CD4-positive, alpha-beta memory T cell (primary cell): ENCODE measurements at regions of chr22 and their contacts with region 1.

Region 1: GRCh38 chr22:36301384-36301828 is 48.5 kb downstream of the APOL1 start:
- DNase-seq: peak; percentile 80 to 83 (median 80)
- H3K4me3 ChIP-seq: no peak overlapping the region
- H3K4me3 Mint-ChIP-seq: peak overlapping the region in 1 of 8 donors; percentile 49
- H3K27ac ChIP-seq: peak overlapping the region; percentile 8
- H3K27ac Mint-ChIP-seq: peak overlapping the region; percentile 57 to 89 (median 81)
- H3K4me1 ChIP-seq: peaks cover 11% of the 10 kb centered on the region
- H3K4me1 Mint-ChIP-seq: peaks cover 5 to 24% (median 14%) of the 10 kb centered on the region in 4 donors
- H3K27me3 ChIP-seq: no peaks in the 10 kb centered on the region
- H3K27me3 Mint-ChIP-seq: no peaks in the 10 kb centered on the region

Region 2: GRCh38 chr22:36136475-36136874 is 164.9 kb before region 1 on chr22:
- CTCF ChIA-PET with region 1: no interaction called
- POLR2A ChIA-PET with region 1: no interaction called
- intact Hi-C with region 1: no loop called
- DNase-seq: no peak
- H3K4me3 ChIP-seq: no peak overlapping the region
- H3K4me3 Mint-ChIP-seq: no peak overlapping the region
- H3K27ac ChIP-seq: no peak overlapping the region
- H3K27ac Mint-ChIP-seq: peak overlapping the region in 3 of 7 donors; percentile 7 to 66 (median 10)
- H3K4me1 ChIP-seq: peaks cover 11% of the 10 kb centered on the region
- H3K4me1 Mint-ChIP-seq: peaks cover 8 to 37% (median 19%) of the 10 kb centered on the region in 4 donors
- H3K27me3 ChIP-seq: no peaks in the 10 kb centered on the region
- H3K27me3 Mint-ChIP-seq: no peaks in the 10 kb centered on the region

Region 3: DNA sequence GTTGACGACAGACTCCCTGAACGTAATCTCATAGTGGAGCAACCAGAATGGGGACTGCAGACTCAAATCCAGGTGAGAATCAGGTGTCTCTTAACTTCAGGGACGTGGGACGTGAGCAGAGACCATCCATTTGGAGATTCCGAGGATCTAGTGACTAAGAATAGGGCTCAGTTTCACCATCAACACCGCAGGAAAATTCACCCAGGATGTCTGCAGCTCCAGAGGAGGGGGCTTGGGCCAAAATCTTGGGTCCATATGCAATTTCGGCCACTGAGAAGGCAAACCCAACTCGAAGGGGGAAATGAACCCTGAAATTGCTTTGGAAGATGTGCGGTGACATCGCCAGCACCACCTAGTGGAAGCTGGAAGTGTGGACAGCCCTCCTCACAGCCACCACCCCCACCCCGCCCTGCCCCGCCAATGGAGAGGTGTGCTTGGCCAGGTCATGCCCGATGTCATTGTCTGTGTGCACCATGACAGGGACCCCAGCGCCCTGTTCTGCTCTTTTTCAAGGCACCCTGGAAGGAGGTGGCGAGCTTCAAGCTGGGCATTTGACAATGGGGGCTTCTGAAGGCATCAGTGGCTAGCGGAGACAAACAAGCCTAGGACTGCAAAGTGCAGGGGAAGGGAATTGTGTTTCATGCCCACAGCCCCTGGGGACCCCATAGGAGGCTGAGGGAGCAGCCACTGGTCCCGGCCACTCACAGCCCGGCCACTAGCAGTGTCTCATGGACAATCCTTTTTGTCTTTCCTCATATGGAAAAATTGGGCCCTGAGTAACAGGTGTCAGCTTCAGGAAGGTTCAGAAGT is 23.7 kb before region 1 on chr22:
- CTCF ChIA-PET with region 1: interaction called, 13 read pairs
- POLR2A ChIA-PET with region 1: interaction called, 4 read pairs
- intact Hi-C with region 1: no loop called
- DNase-seq: peak; percentile 53 to 75 (median 59)
- H3K4me3 ChIP-seq: no peak overlapping the region
- H3K4me3 Mint-ChIP-seq: peak overlapping the region in 1 of 8 donors; percentile 59
- H3K27ac ChIP-seq: no peak overlapping the region
- H3K27ac Mint-ChIP-seq: peak overlapping the region in 6 of 7 donors; percentile 50 to 88 (median 79)
- H3K4me1 ChIP-seq: peaks cover 15% of the 10 kb centered on the region
- H3K4me1 Mint-ChIP-seq: peaks cover 12 to 25% (median 17%) of the 10 kb centered on the region in 4 donors
- H3K27me3 ChIP-seq: no peaks in the 10 kb centered on the region
- H3K27me3 Mint-ChIP-seq: no peaks in the 10 kb centered on the region

Region 4: GRCh38 chr22:36331306-36331911 is 30.0 kb after region 1 on chr22:
- CTCF ChIA-PET with region 1: interaction called, 52 read pairs
- POLR2A ChIA-PET with region 1: interaction called, 59 read pairs
- intact Hi-C with region 1: loop called (anchors 2 kb)
- DNase-seq: peak; percentile 69 to 93 (median 78)
- H3K4me3 ChIP-seq: peak overlapping the region; percentile 14 to 53
- H3K4me3 Mint-ChIP-seq: peak overlapping the region; percentile 87 to 94 (median 88)
- H3K27ac ChIP-seq: peak overlapping the region; percentile 84
- H3K27ac Mint-ChIP-seq: peak overlapping the region; percentile 94 to 99 (median 99)
- H3K4me1 ChIP-seq: peaks cover 94% of the 10 kb centered on the region
- H3K4me1 Mint-ChIP-seq: peaks cover 86 to 100% (median 93%) of the 10 kb centered on the region in 4 donors
- H3K27me3 ChIP-seq: no peaks in the 10 kb centered on the region
- H3K27me3 Mint-ChIP-seq: no peaks in the 10 kb centered on the region

Region 5: GRCh38 chr22:36369922-36370791 is 68.8 kb after region 1 on chr22:
- CTCF ChIA-PET with region 1: interaction called, 16 read pairs
- POLR2A ChIA-PET with region 1: interaction called, 3 read pairs
- intact Hi-C with region 1: no loop called
- DNase-seq: peak in 1 of 5 donors; percentile 65
- H3K4me3 ChIP-seq: peak overlapping the region in 1 of 2 donors; percentile 32
- H3K4me3 Mint-ChIP-seq: peak overlapping the region; percentile 84 to 93 (median 88)
- H3K27ac ChIP-seq: peak overlapping the region; percentile 91
- H3K27ac Mint-ChIP-seq: peak overlapping the region; percentile 92 to 99 (median 98)
- H3K4me1 ChIP-seq: peaks cover 100% of the 10 kb centered on the region
- H3K4me1 Mint-ChIP-seq: peaks cover 74 to 100% (median 87%) of the 10 kb centered on the region in 4 donors
- H3K27me3 ChIP-seq: no peaks in the 10 kb centered on the region
- H3K27me3 Mint-ChIP-seq: no peaks in the 10 kb centered on the region

Region 6: GRCh38 chr22:36409911-36410756 is 108.7 kb after region 1 on chr22:
- CTCF ChIA-PET with region 1: interaction called, 13 read pairs
- POLR2A ChIA-PET with region 1: interaction called, 6 read pairs
- intact Hi-C with region 1: loop called (anchors 1 kb)
- DNase-seq: peak; percentile 58 to 80 (median 64)
- H3K4me3 ChIP-seq: peak overlapping the region in 1 of 2 donors; percentile 44
- H3K4me3 Mint-ChIP-seq: peak overlapping the region; percentile 61 to 79 (median 72)
- H3K27ac ChIP-seq: peak overlapping the region; percentile 49
- H3K27ac Mint-ChIP-seq: peak overlapping the region; percentile 86 to 96 (median 91)
- H3K4me1 ChIP-seq: peaks cover 65% of the 10 kb centered on the region
- H3K4me1 Mint-ChIP-seq: peaks cover 35 to 68% (median 52%) of the 10 kb centered on the region in 4 donors
- H3K27me3 ChIP-seq: no peaks in the 10 kb centered on the region
- H3K27me3 Mint-ChIP-seq: no peaks in the 10 kb centered on the region

Region 7: GRCh38 chr22:36481393-36482168 is 180.2 kb after region 1 on chr22 and contains the start of gene TXN2:
- CTCF ChIA-PET with region 1: interaction called, 37 read pairs
- POLR2A ChIA-PET with region 1: interaction called, 6 read pairs
- intact Hi-C with region 1: no loop called
- DNase-seq: peak; percentile 97 to 99 (median 97)
- H3K4me3 ChIP-seq: peak within 1 kb of the TSS; percentile 80 to 86
- H3K4me3 Mint-ChIP-seq: peak within 1 kb of the TSS; percentile 90 to 100 (median 98)
- H3K27ac ChIP-seq: peak within 1 kb of the TSS; percentile 80
- H3K27ac Mint-ChIP-seq: peak within 1 kb of the TSS; percentile 93 to 100 (median 99)
- H3K4me1 ChIP-seq: peaks cover 22% of the 10 kb centered on the region
- H3K4me1 Mint-ChIP-seq: peaks cover 12 to 31% (median 17%) of the 10 kb centered on the region in 4 donors
- H3K27me3 ChIP-seq: no peaks in the 10 kb centered on the region
- H3K27me3 Mint-ChIP-seq: peaks cover 0 to 3% of the 10 kb centered on the region in 2 donors
- total RNA-seq, gene TXN2: 33.5 to 34.5 TPM